MCF 10A (cell line): ENCODE measurements at regions of chr6 and their contacts with region 1.

Region 1: DNA sequence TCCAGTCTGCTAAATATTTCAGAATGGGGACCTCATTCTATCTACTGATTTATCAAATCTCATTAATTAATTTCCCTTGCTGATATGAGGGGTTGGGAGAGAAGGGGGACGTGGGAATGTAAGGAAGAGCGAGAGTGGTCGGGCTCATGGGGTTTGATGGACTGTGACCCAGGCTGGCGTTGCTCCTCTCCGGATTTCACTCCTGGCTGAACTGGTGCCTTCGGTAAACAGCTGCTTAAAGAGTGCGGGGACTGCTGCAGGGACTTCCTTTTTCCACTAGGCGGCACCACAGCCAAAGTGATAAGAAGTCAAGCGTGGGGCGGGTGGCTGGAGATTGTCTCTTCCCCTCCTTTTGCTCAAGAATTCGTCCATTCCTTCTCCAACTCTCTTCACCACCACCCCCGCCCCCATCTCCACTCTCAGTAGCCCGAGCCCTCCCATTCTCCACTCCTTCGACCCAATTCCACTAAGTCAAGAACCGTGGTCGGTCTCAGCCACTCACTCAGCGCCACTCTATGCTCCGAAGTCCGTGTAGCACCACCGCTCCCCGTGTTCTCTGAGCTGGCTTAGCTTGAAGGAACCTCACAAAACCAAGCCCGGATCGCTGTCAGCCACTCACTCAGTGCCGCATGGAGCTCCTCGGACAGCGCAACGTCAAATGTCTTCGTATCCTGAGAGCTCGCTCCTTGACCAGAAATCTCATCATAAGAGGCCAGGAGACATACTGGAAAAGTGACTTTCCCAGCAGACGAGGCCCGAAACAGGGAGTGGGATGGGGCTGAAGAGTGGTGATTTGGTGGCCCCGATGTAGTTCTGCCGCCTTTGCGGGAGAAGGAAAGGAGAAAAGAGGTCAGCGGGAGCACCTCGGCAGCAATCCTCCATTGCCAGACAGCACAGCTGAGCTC is 9.7 kb downstream of the TRIM31 start:
- DNase-seq: peak; percentile 91
- H3K4me3 Mint-ChIP-seq: peak overlapping the region; percentile 70
- H3K27ac Mint-ChIP-seq: peak overlapping the region; percentile 84
- H3K4me1 Mint-ChIP-seq: peaks cover 35% of the 10 kb centered on the region
- H3K27me3 Mint-ChIP-seq: peaks cover 7% of the 10 kb centered on the region
- CTCF ChIP-seq: peak; percentile 85

Region 2: GRCh38 chr6:30066577-30067459 is 36.4 kb before region 1 on chr6 and contains the start of gene PPP1R11:
- CTCF ChIA-PET with region 1: interaction called, 11 read pairs
- POLR2A ChIA-PET with region 1: interaction called, 83 read pairs
- intact Hi-C with region 1: loop called (anchors 2 kb)
- DNase-seq: peak; percentile 99
- H3K4me3 Mint-ChIP-seq: peak within 1 kb of the TSS; percentile 79
- H3K27ac Mint-ChIP-seq: peak within 1 kb of the TSS; percentile 99
- H3K4me1 Mint-ChIP-seq: peaks cover 42% of the 10 kb centered on the region
- H3K27me3 Mint-ChIP-seq: no peaks in the 10 kb centered on the region
- CTCF ChIP-seq: no peak
- total RNA-seq, gene PPP1R11: 60.1 and 82.2 TPM in 2 replicates

Region 3: DNA sequence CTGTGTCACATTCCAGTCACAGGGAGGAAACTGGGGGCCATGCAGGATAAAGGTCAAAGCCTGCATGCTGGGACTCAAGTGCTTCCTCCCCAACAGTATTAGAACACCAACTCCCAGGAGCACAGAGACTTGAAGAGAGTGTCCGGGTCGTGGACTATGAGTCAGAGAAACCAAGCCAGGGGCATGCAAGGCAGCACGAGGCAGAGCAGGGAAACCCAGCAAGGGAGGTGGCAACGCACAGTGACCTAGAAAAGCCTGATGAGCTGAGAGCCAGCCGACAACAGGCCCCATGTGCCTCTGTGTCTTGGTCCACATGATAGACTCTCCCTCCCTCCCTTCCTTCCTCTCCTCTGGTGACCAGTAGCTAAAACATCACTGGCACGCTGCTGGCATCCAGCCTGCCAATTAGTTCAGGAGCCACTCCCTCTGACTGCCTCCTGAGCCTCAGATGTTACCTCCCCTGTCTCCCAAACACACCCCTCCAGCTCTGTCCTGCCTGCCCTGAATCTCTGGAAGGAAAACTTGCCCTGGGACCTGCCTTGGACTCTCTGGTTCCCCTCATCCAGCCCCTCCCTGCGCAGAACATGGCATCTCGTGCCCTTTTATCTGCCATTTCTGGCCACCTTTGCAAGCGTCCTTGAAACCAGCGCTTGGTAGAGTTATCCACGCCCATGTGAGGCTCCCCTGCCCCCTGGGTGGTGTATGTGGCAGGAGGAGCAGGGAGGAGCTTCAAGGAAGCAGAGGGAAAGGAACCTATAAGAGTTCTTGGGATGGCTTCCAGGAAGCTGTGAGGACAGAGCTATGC is 11.4 kb before region 1 on chr6:
- CTCF ChIA-PET with region 1: interaction called, 10 read pairs
- POLR2A ChIA-PET with region 1: interaction called, 20 read pairs
- intact Hi-C with region 1: no loop called
- DNase-seq: peak; percentile 79
- H3K4me3 Mint-ChIP-seq: no peak overlapping the region
- H3K27ac Mint-ChIP-seq: peak overlapping the region; percentile 67
- H3K4me1 Mint-ChIP-seq: peaks cover 25% of the 10 kb centered on the region
- H3K27me3 Mint-ChIP-seq: no peaks in the 10 kb centered on the region
- CTCF ChIP-seq: no peak

Region 4: DNA sequence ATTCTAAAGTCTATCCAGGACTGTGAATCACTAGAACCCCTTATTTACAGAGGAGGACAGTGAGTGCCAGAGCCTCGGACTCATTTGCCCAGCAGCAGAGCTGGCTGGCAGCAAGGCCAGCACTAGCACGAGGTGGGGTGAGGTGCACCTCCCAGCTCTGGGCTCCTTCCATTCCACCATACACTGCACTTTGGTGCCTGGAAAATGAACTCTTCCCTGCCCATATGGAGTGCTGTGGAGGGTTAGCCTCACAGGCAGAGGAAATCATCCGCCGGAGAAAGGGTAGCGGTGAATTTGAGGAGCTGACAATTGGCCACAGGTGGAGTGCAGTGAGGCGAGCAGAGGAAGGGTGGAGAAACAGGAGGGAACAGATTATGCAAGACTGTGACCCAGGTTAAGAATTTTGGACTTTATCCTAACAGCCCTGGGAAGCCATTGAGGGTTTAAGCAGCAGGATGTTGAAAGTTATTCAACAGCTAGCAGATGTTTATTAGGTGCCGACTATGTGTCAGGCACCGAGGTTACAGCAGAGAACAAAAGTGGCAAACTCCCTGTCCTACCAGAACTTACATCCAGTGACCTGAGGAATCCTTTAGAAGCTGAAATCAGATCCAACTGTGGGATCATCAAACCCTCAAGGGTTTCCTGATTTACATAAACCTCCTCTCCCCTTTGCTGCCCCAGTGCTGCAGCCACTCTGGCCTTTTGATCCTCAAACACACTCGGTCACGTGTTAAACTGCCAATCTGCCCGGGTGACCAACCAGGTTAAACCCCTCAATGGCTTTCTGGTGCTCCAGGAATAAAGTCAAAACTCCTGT is 103.8 kb after region 1 on chr6:
- CTCF ChIA-PET with region 1: interaction called, 6 read pairs
- POLR2A ChIA-PET with region 1: interaction called, 28 read pairs
- intact Hi-C with region 1: loop called (anchors 2 kb)
- DNase-seq: peak; percentile 87
- H3K4me3 Mint-ChIP-seq: peak overlapping the region; percentile 50
- H3K27ac Mint-ChIP-seq: peak overlapping the region; percentile 36
- H3K4me1 Mint-ChIP-seq: peaks cover 50% of the 10 kb centered on the region
- H3K27me3 Mint-ChIP-seq: no peaks in the 10 kb centered on the region
- CTCF ChIP-seq: no peak

Region 5: DNA sequence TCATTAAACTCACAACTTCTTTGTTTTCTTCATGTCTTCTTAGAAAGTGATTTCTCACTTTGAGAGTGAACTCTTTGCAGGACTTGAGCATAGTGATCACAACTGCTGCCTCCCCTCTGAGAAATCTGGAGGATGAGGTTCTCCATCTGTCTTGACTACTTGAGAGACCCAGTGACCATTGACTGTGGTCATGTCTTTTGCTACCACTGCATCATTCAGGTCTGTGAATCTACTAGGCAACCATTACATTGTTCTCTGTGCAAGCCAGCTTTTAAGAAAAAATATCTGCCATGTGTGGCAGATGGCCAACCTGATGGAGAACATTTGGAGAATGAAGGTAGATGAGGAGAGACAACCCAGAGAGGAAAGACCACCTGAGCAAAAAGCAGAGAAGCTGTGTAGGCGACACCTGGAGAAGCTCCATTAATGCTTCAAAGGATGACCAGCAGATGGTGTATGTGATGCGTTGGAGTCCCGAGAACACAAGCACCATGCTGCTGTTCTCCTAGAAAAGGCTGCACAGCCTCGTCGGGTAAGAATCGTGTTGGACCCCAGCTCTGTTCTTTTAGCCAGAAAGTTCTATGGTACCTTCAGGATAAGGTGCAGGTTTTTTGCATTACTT is 135.1 kb after region 1 on chr6:
- CTCF ChIA-PET with region 1: no interaction called
- POLR2A ChIA-PET with region 1: no interaction called
- intact Hi-C with region 1: no loop called
- DNase-seq: peak; percentile 43
- H3K4me3 Mint-ChIP-seq: no peak overlapping the region
- H3K27ac Mint-ChIP-seq: no peak overlapping the region
- H3K4me1 Mint-ChIP-seq: peaks cover 10% of the 10 kb centered on the region
- H3K27me3 Mint-ChIP-seq: peaks cover 38% of the 10 kb centered on the region
- CTCF ChIP-seq: peak; percentile 22

Region 6: GRCh38 chr6:30326526-30327260 is 223.5 kb after region 1 on chr6 and contains the start of gene TRIM39:
- CTCF ChIA-PET with region 1: no interaction called
- POLR2A ChIA-PET with region 1: interaction called, 10 read pairs
- intact Hi-C with region 1: loop called (anchors 2 kb)
- DNase-seq: peak; percentile 81
- H3K4me3 Mint-ChIP-seq: peak within 1 kb of the TSS; percentile 90
- H3K27ac Mint-ChIP-seq: peak within 1 kb of the TSS; percentile 98
- H3K4me1 Mint-ChIP-seq: peaks cover 30% of the 10 kb centered on the region
- H3K27me3 Mint-ChIP-seq: no peaks in the 10 kb centered on the region
- CTCF ChIP-seq: no peak
- total RNA-seq, gene TRIM39: 14.7 and 18.6 TPM in 2 replicates